Adrenal gland (tissue), 19 donors: ENCODE measurements at regions of chr13 and their contacts with region 1.

Region 1: DNA sequence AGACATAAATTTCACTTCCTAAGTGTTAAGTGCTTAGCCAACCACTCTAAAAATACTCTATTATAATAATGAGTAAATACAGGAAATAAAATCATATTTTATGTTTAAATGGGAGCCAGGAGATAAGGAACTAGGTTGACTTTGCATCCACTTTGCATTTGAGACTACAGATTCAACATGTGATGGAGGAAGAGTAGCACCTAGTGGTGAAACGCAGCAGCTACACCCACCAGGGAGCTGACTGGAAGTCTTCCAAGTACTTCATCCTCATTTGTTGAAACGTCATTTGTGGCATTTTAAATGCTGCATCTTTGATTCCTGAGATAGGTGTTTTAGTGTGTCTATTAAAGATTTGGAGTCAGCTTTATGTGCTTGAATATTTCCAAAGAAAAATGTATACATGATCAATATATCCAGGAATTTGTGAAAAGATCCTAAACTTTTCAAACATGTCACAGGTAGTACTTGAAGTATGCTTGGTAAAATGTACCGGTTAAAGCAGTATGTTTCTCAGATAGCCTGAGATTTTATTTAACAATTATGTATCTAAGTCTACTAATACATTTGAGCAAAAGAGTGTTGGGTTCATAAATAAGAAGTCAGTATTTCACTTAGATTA is 17.4 kb upstream of the KCTD12 start:
- DNase-seq: peak; percentile 42 to 90 (median 71)
- H3K4me3 ChIP-seq: no peak overlapping the region
- H3K27ac ChIP-seq: no peak overlapping the region
- H3K4me1 ChIP-seq: no peaks in the 10 kb centered on the region
- H3K27me3 ChIP-seq: no peaks in the 10 kb centered on the region
- CTCF ChIP-seq: peak; percentile 94 to 100 (median 96)
- POLR2A ChIP-seq: no peak

Region 2: DNA sequence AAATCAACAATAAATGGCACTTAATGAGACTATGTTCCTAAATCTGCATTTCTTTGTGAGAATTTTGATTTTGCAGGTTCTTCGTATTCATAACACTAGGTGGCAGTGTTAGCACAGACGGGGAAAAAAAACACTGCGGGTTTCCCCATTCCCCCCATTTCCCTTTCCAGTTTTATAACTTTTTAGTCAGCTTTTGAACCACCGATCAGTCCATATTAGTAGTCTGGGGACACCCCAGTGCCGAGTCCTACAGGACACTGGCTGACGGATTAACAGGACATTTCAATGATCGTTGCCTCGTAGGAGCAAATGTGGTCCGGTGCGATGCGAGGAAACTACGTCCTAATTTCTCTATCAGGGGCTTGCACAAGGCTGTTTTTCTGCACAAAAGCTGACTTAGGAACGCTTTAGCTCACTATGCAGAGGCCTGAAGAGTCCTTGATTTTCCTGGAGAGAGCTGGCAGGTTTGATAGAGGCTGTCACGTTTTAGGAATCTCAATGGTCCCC is 1033.2 kb before region 1 on chr13:
- intact Hi-C with region 1: loop called (anchors 5 kb)
- DNase-seq: no peak
- H3K4me3 ChIP-seq: peak overlapping the region in 1 of 4 donors; percentile 16
- H3K27ac ChIP-seq: no peak overlapping the region
- H3K4me1 ChIP-seq: no peaks in the 10 kb centered on the region
- H3K27me3 ChIP-seq: peaks cover 4% of the 10 kb centered on the region
- CTCF ChIP-seq: peak; percentile 27 to 79 (median 62)
- POLR2A ChIP-seq: no peak

Region 3: DNA sequence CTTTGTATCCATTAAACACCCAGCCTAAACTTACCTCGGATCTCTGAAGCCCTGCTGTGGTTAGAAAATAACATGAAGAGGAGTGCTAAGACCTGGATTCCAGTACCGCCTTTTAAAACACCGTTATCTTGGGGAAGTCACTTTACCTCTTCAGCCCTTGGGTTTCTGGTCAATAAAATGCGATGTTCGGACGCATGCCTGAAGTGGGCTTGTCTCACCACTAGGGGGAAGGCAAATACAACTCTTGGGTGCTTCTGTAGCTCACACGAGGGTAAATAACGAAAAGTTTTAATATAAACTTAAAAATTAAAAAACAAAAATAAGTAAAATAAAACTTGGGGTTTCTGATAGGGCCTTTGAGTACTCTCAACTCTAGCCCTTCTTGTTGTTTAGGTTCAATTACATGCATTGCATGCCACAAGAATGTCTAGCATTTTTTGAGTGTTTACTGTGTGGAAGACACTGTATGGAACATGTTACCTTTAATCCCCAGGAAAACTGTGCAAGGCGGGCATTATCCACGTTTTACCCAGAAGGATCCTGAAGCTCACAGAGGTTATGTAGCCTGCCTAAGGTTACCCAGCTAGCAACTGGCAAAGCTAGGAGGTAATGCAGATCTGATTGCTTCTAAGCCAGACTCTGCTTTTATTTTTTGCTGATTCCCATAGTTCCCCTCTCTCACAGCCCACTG is 1027.1 kb before region 1 on chr13:
- intact Hi-C with region 1: loop called (anchors 5 kb)
- DNase-seq: peak; percentile 45 to 80 (median 56)
- H3K4me3 ChIP-seq: no peak overlapping the region
- H3K27ac ChIP-seq: no peak overlapping the region
- H3K4me1 ChIP-seq: peaks cover 0 to 4% of the 10 kb centered on the region in 2 donors
- H3K27me3 ChIP-seq: peaks cover 5% of the 10 kb centered on the region
- CTCF ChIP-seq: peak; percentile 72 to 93 (median 84)
- POLR2A ChIP-seq: no peak

Region 4: GRCh38 chr13:76667551-76667950 is 236.1 kb before region 1 on chr13:
- intact Hi-C with region 1: loop called in 1 of 2 experiments (anchors 10 kb)
- DNase-seq: peak in 2 of 7 donors; percentile 14 to 44
- H3K4me3 ChIP-seq: no peak overlapping the region
- H3K27ac ChIP-seq: no peak overlapping the region
- H3K4me1 ChIP-seq: no peaks in the 10 kb centered on the region
- H3K27me3 ChIP-seq: no peaks in the 10 kb centered on the region
- CTCF ChIP-seq: peak in 5 of 6 experiments; percentile 16 to 62 (median 48)
- POLR2A ChIP-seq: no peak